Activated CD4-positive, alpha-beta T cell treated with anti-CD3 and anti-CD28 coated beads for 36 hours (primary cell): ENCODE measurements at regions of chr12 and their contacts with region 1.

Region 1: GRCh38 chr12:69266036-69266635 is 26.8 kb downstream of the CPSF6 start:
- DNase-seq: no peak
- ATAC-seq: peak; percentile 68
- H3K4me3 Mint-ChIP-seq: no peak overlapping the region
- H3K27ac Mint-ChIP-seq: peak overlapping the region; percentile 1
- H3K4me1 Mint-ChIP-seq: peaks cover 16% of the 10 kb centered on the region
- H3K27me3 Mint-ChIP-seq: no peaks in the 10 kb centered on the region

Region 2: GRCh38 chr12:68831272-68831671 is 434.9 kb before region 1 on chr12:
- CTCF ChIA-PET with region 1: no interaction called
- POLR2A ChIA-PET with region 1: no interaction called
- intact Hi-C with region 1: loop called in 1 of 2 experiments (anchors 10 kb)
- DNase-seq: no peak
- ATAC-seq: no peak
- H3K4me3 Mint-ChIP-seq: no peak overlapping the region
- H3K27ac Mint-ChIP-seq: no peak overlapping the region
- H3K4me1 Mint-ChIP-seq: peaks cover 19% of the 10 kb centered on the region
- H3K27me3 Mint-ChIP-seq: no peaks in the 10 kb centered on the region

Region 3: DNA sequence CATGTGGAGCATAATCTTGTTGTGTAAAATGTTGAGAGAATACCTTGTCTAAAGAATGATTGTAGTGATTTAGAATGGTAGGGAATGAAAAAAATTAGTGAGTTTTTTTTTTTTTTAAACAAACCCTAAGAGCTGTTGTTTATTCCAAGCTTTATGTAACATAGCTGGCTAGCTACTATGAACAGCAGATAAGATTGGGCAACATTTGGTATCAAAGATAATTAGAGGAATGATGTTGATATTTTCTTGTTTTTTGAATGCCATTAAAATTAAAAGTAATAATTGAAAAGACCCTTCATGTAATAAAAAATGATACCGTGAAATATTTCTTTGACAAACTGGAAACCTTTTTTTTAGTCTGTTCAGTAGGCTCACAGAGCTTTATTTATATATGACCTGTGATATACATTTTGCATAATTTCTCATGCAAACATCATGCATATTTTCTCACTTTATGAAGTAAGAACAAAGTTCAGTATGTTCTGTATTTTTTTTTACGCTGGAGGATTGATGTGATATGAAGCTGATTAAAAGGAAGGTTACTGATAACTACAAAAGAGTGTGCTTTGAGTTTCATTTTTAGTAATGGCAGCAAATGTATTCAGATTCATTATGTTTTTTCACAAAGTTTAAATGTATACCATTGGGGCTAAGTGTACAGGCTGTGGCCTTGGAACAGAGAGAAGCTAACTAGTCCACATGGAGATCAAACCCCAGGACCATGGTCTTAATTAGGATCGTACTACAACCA is 18.7 kb before region 1 on chr12:
- CTCF ChIA-PET with region 1: interaction called, 10 read pairs
- POLR2A ChIA-PET with region 1: no interaction called
- intact Hi-C with region 1: no loop called
- DNase-seq: no peak
- ATAC-seq: peak; percentile 47
- H3K4me3 Mint-ChIP-seq: peak overlapping the region; percentile 8
- H3K27ac Mint-ChIP-seq: peak overlapping the region; percentile 69
- H3K4me1 Mint-ChIP-seq: peaks cover 72% of the 10 kb centered on the region
- H3K27me3 Mint-ChIP-seq: no peaks in the 10 kb centered on the region

Region 4: GRCh38 chr12:69254046-69254445 is 12.1 kb before region 1 on chr12:
- CTCF ChIA-PET with region 1: interaction called, 17 read pairs
- POLR2A ChIA-PET with region 1: interaction called, 4 read pairs
- intact Hi-C with region 1: no loop called
- DNase-seq: no peak
- ATAC-seq: peak; percentile 91
- H3K4me3 Mint-ChIP-seq: no peak overlapping the region
- H3K27ac Mint-ChIP-seq: peak overlapping the region; percentile 59
- H3K4me1 Mint-ChIP-seq: peaks cover 37% of the 10 kb centered on the region
- H3K27me3 Mint-ChIP-seq: no peaks in the 10 kb centered on the region

Region 5: GRCh38 chr12:69290545-69291277 is 24.6 kb after region 1 on chr12:
- CTCF ChIA-PET with region 1: interaction called, 4 read pairs
- POLR2A ChIA-PET with region 1: interaction called, 10 read pairs
- intact Hi-C with region 1: no loop called
- DNase-seq: peak; percentile 88
- ATAC-seq: peak; percentile 100
- H3K4me3 Mint-ChIP-seq: no peak overlapping the region
- H3K27ac Mint-ChIP-seq: no peak overlapping the region
- H3K4me1 Mint-ChIP-seq: peaks cover 4% of the 10 kb centered on the region
- H3K27me3 Mint-ChIP-seq: peaks cover 19% of the 10 kb centered on the region

Region 6: GRCh38 chr12:69553627-69554248 is 287.6 kb after region 1 on chr12:
- CTCF ChIA-PET with region 1: no interaction called
- POLR2A ChIA-PET with region 1: no interaction called
- intact Hi-C with region 1: no loop called
- DNase-seq: no peak
- ATAC-seq: no peak
- H3K4me3 Mint-ChIP-seq: no peak overlapping the region
- H3K27ac Mint-ChIP-seq: no peak overlapping the region
- H3K4me1 Mint-ChIP-seq: peaks cover 5% of the 10 kb centered on the region
- H3K27me3 Mint-ChIP-seq: no peaks in the 10 kb centered on the region